Endothelial cell of umbilical vein (primary cell): ENCODE measurements at regions of chr6 and their contacts with region 1.

Region 1: GRCh38 chr6:117399924-117400323 is 25.8 kb downstream of the ROS1 start:
- DNase-seq: peak; percentile 13
- H3K4me3 ChIP-seq: no peak overlapping the region
- H3K27ac ChIP-seq: no peak overlapping the region
- H3K4me1 ChIP-seq: no peaks in the 10 kb centered on the region
- H3K27me3 ChIP-seq: peaks cover 0 to 5% of the 10 kb centered on the region in 2 experiments
- CTCF ChIP-seq: no peak
- POLR2A ChIP-seq: no peak

Region 2: DNA sequence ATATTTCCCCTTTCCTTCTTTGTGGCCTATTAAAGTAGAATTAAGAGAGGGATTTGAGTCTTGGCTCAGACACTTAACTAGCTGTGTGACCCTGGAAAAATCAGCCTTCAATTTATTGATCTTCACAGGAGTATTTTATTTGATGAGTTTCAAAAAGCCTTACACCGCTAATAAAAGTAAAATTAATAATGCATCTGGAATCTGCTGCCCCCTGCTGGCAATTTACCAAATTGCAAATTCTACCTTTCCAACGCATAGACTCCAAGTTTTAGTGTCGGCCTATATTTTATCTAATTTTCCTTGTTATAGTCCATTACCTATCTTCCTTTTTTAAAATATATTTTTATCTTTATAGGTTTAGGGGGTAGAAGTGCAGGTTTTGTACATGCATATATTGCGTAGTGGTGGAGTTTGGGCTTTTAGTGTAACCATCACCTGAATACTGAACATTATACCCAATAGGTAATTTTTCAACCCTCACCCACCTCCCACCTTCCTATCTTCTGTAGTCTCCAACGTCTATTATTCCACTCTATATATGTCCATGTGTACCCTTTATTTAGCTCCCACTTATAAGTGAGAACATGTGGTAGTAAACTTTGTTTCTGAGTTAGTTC is 156.1 kb after region 1 on chr6:
- CTCF ChIA-PET with region 1: interaction called, 3 read pairs
- POLR2A ChIA-PET with region 1: no interaction called
- dilution Hi-C with region 1: no loop called
- intact Hi-C with region 1: loop called (anchors 2 kb)
- DNase-seq: peak; percentile 68
- H3K4me3 ChIP-seq: no peak overlapping the region
- H3K27ac ChIP-seq: no peak overlapping the region
- H3K4me1 ChIP-seq: peaks cover 25% of the 10 kb centered on the region
- H3K27me3 ChIP-seq: no peaks in the 10 kb centered on the region
- CTCF ChIP-seq: peak; percentile 45 to 59
- POLR2A ChIP-seq: no peak

Region 3: GRCh38 chr6:117607511-117607910 is 207.6 kb after region 1 on chr6:
- CTCF ChIA-PET with region 1: interaction called, 49 read pairs
- POLR2A ChIA-PET with region 1: no interaction called
- dilution Hi-C with region 1: no loop called
- intact Hi-C with region 1: loop called (anchors 1 kb)
- DNase-seq: no peak
- H3K4me3 ChIP-seq: no peak overlapping the region
- H3K27ac ChIP-seq: no peak overlapping the region
- H3K4me1 ChIP-seq: peaks cover 2% of the 10 kb centered on the region
- H3K27me3 ChIP-seq: peaks cover 4 to 12% of the 10 kb centered on the region in 2 experiments
- CTCF ChIP-seq: no peak
- POLR2A ChIP-seq: no peak